ENCODE measurements at regions of chr4 and their contacts with region 1.

Region 1: DNA sequence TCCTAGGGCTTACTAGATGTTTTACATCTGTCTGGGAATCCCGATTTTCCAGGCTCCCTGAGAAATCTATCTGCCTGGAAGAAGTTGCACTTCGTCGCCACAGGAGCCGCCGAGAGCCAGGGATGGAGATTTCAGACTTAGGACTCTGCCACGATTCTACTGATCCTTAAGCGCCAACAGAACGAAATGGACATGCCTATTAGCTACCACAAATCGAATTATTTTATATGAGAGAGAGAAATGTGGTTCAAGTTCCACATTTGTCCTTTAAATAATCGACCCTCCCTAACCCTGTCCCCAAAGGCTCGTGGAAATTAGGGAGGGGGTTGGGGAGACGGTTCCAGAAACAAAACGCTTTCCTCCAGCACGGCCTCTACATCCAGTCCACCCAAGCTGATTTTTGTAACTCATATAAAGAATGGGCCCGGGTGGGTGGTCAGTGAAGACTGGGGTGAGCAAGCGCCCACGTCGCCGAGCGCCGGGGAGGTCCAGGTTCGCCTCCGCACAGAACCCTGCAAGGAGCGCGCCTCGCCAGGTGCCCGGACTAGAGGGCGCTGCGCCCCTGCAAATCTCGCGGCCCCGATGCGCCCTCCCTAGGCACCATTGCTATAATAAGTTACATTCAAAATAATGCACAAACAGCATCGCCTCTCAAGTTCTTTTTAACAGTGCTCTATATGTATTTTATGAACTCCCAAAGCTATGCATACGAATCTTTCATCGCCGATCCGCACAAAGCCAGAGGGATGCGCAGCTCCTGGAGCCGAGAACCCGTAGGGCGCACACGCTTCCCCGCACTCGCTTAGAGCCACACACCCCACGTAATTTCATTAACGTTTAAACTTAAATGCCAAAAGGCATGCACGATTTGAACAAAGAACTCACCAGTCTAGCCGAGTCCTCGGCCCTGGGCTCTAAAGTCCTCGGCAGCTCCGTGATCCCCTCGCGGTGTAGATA is 2.1 kb upstream of the FAT1 start:
- DNase-seq: no peak

Region 2: DNA sequence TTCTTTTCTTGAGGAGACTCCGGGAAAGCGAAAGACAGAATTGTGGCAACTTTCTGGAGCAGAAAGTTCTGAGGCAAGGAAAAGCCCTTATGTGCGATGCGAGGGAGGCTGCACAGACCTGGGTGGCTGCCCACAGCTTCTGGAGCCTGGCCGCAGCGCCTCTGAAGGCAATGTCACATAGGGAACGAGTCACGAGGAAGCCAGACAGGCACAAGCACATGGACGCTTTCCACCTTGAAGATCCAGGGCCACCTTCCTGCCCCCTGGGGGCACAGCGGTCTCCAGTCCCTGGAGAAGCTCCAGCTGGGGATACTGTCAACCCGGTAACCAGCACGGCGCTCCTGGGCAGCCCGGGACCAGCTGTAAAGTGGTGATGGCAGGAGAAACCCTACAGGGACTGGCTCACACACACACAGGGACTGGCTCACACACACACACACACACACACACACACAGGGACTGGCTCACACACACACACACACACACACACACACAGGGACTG is 240.1 kb before region 1 on chr4:
- intact Hi-C with region 1: no loop called
- DNase-seq: no peak

Region 3: GRCh38 chr4:186669735-186670134 is 56.0 kb before region 1 on chr4:
- intact Hi-C with region 1: loop called (anchors 2 kb)
- DNase-seq: no peak

Region 4: DNA sequence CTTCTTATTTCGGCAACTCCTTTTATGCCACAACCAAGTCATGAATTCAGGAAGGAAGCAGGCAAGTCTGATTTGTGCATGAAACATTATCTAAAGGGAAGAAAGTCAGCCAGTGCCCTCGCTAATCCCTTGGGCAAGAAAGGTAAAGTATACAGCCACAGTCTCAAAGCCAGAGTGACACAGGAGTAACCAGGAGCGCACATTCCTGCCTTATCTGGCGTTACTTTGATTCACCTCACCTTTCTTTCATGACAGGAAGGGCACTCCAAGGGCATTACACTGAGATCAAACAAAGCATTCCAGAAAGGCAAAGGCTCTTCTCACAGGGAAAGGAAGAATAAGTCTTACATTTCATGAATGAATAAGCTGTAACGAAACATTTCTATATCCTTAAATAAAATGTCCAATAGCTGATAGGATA is 40.8 kb before region 1 on chr4:
- intact Hi-C with region 1: no loop called
- DNase-seq: no peak

Region 5: DNA sequence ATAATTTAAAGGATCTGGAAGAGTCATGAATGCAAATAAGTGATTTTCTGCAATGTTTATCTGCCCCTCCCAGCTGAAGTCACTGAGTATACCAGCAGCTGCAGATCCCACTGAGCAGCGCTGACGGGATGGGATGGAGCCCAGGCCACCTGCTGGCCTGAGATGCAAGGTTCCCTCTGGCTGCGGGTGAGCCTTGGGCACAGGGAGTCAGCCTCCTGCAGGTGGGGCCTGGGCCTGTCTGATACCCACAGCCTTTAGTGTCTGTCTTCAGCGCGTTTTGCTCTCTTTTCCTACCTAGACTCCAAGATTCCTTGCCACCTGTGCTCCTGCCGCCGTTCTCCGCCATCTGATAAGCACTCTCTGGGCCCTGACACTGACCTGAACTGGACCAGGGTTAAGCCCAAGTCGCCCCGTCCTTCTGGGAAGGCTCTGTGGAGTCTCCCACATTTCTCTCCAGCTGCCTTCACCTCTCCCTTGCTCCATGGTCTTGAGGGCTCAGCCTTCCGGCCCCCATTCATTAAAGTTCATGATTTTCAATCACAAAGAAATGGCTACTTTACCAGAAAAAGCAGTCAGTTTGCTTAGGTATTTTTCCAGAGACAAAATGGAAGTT is 221.0 kb after region 1 on chr4:
- intact Hi-C with region 1: loop called (anchors 5 kb)
- DNase-seq: no peak

Region 6: DNA sequence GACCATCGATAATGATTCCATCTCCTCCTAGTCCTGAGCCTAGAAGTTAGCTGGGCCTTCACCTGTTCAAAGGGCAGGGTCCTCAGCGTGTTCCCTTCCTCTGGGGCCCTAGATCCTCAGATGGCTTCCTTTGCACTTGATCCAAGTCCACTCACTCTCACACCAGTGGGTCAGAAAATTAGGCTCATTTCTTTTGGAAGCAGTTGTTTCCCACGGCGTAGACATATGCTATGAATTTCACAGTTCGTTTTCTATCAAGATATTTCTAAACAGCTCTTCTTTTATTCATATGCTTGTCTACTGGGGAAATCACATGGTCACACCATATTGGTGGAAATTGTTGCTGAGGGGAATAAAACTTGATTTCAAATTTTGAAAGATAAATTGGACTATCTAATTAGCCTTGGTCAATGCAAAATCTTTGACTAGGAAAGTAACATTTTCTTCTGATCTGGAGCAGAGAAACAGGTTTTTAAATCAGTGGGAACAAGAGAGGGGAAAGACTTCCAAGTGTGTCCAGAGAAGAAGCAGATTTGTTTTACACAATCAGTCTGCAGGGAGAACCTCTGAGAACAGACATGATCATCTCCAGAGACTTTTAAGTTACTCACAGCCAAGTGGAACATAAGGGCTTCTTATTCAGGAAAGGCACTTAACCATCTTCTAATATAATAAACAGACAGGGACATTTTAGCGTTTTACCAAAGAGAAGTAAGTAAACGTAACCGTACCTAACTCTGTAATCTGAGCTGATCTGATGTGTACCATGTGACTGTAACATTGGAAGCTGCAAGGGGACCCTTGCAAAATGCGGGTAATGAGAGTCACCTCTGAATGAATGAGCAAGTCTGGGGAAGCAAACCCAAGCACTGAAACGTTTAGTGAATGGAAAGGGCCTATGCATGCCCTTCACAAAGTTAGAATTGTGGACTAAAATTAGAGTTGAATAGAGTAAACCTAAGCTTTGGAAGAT is 453.6 kb after region 1 on chr4:
- intact Hi-C with region 1: loop called (anchors 5 kb)
- DNase-seq: no peak

Region 7: DNA sequence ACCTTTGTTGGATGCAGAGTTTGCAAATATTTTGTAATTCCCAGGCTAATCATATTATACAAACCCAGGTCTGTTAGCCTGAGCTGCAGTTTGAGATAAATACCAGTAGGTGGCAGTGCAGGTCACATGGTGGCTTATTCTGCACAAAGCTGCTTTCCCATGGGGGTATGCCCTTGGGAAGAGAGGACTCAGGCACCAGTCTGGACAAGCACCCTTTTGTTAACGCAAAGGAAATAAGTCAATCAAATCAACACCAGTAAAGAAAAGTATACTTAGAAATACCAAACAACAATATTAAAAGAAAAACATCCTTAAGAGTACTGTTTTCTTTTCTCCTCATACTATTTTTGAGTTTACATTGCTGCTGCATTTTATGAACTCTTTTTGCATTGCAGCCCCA is 880.8 kb after region 1 on chr4:
- intact Hi-C with region 1: loop called (anchors 5 kb)
- DNase-seq: no peak